ENCODE measurements at regions of chr17 and their contacts with region 1.

Region 1: GRCh38 chr17:27332485-27333409 is 38.8 kb downstream of the WSB1 start:
- DNase-seq: peak; percentile 99
- H3K4me3 ChIP-seq: peak overlapping the region; percentile 14 to 36 (median 25)
- H3K27ac ChIP-seq: peak overlapping the region; percentile 89 to 95 (median 92)
- H3K4me1 ChIP-seq: peaks cover 10 to 17% of the 10 kb centered on the region in 2 donors
- H3K27me3 ChIP-seq: no peaks in the 10 kb centered on the region
- CTCF ChIP-seq: peak; percentile 45 to 98 (median 86)
- POLR2A ChIP-seq: peak in 1 of 2 donors; percentile 69

Region 2: GRCh38 chr17:27245230-27245696 is 87.5 kb before region 1 on chr17:
- intact Hi-C with region 1: loop called (anchors 5 kb)
- DNase-seq: peak; percentile 56 to 75
- H3K4me3 ChIP-seq: no peak overlapping the region
- H3K27ac ChIP-seq: peak overlapping the region; percentile 29 to 85 (median 51)
- H3K4me1 ChIP-seq: peaks cover 23 to 57% of the 10 kb centered on the region in 2 donors
- H3K27me3 ChIP-seq: no peaks in the 10 kb centered on the region
- CTCF ChIP-seq: peak in 5 of 6 experiments; percentile 11 to 72 (median 60)
- POLR2A ChIP-seq: no peak

Measured in thyroid gland (tissue), 4 donors.